WTC11 (cell line): ENCODE measurements at regions of chr14 and their contacts with region 1.

Region 1: DNA sequence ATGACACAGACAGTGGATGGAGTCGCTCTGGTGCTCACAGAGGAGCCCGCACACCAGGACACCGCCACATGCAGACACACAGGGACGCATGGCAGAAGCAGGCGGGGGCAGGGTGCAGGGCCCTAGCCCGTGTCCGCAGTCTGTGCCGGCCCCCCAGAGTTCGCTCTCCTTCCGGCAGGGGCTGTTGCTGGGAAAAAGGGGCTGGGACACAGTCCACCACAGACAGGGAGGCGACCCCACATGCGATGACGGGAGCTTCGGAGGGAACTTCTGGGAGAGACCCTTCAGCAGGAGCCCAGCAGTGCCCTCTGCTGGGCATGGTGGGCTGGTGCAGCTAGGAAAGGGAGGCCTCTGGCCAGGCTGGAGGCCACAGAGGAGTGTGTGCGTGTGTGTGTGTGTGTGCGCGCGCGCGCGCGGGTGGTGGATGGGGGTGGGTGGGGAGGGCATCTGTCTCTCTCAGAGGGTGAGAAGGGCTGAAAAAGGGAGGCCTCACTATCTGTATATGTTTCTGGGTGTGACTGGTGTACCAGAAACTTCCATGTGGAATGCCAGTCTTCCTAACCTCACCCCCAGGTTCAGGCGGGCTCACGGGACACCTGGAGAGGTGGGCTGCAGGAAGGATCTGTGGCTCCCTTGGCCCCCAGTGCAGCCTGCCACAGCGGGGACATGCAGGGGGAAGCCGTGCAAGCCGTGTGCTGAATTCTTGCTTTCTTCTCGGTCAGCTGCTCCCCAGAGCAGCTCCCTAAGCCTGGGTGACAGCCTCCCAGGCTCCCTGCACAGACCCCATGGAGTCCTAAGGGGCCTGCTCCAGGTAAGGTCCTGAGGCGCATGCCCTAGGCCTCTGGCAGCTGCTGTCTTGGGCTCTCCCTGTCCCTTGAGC is 60.7 kb downstream of the PLEKHG3 start:
- DNase-seq: peak; percentile 86
- ATAC-seq: peak; percentile 54
- H3K4me3 Mint-ChIP-seq: peak overlapping the region; percentile 40
- H3K27ac Mint-ChIP-seq: no peak overlapping the region
- H3K4me1 Mint-ChIP-seq: peaks cover 48% of the 10 kb centered on the region
- H3K27me3 Mint-ChIP-seq: peaks cover 18% of the 10 kb centered on the region
- CTCF ChIP-seq: peak; percentile 95

Region 2: GRCh38 chr14:64681796-64682710 is 82.8 kb before region 1 on chr14:
- CTCF ChIA-PET with region 1: interaction called, 13 read pairs
- POLR2A ChIA-PET with region 1: no interaction called
- DNase-seq: peak; percentile 40
- ATAC-seq: peak; percentile 84
- H3K4me3 Mint-ChIP-seq: no peak overlapping the region
- H3K27ac Mint-ChIP-seq: peak overlapping the region; percentile 66; the same call in 1 of the 2 replicates
- H3K4me1 Mint-ChIP-seq: peaks cover 39% of the 10 kb centered on the region
- H3K27me3 Mint-ChIP-seq: peaks cover under 1% of the 10 kb centered on the region
- CTCF ChIP-seq: no peak

Region 3: GRCh38 chr14:64704143-64704742 is 60.6 kb before region 1 on chr14 and contains the start of gene PLEKHG3:
- CTCF ChIA-PET with region 1: interaction called, 17 read pairs
- POLR2A ChIA-PET with region 1: no interaction called
- DNase-seq: peak; percentile 89
- ATAC-seq: peak; percentile 15
- H3K4me3 Mint-ChIP-seq: peak within 1 kb of the TSS; percentile 84
- H3K27ac Mint-ChIP-seq: peak within 1 kb of the TSS; percentile 97
- H3K4me1 Mint-ChIP-seq: peaks cover 76% of the 10 kb centered on the region
- H3K27me3 Mint-ChIP-seq: no peaks in the 10 kb centered on the region
- CTCF ChIP-seq: no peak
- total RNA-seq, gene PLEKHG3: 70.6 to 75.3 TPM (median 71.8 TPM) in 3 replicates

Region 4: DNA sequence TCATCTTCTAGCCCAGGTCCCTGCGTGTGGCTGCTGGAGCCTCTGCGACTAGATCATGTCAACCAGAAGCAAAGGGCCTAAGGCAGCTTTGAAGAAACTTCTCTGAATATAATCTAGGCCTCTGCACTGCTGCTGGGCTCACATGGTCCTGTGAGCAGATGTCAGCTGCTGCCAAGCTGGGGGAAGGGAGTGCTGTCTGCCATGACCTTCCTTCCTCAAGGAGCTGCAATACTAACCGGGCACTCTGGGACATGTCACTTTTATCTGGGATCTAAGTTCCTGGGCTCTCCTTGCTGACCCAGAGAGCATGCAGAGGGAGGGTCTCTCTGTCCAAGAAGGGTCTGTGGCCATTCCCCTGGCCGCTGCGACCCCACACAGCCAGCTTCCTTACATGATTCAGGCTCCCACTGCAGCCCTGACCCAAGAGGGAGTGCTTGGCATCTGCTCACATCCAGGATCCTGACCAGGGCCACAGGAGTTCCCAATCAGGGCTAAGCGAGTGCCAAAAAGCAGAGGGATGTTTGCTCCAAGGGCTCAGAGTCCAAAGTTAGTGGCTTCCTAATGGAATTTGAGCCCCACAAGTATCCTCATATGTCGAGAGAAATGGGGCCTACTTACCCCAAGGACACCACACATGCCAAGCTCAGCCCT is 13.3 kb after region 1 on chr14:
- CTCF ChIA-PET with region 1: interaction called, 18 read pairs
- POLR2A ChIA-PET with region 1: no interaction called
- DNase-seq: no peak
- ATAC-seq: no peak
- H3K4me3 Mint-ChIP-seq: no peak overlapping the region
- H3K27ac Mint-ChIP-seq: no peak overlapping the region
- H3K4me1 Mint-ChIP-seq: peaks cover 5% of the 10 kb centered on the region
- H3K27me3 Mint-ChIP-seq: peaks cover 1% of the 10 kb centered on the region; the same call in 1 of the 2 replicates
- CTCF ChIP-seq: no peak

Region 5: GRCh38 chr14:64800000-64800399 is 35.1 kb after region 1 on chr14:
- CTCF ChIA-PET with region 1: interaction called, 75 read pairs
- POLR2A ChIA-PET with region 1: interaction called, 4 read pairs
- DNase-seq: peak; percentile 38
- ATAC-seq: peak; percentile 49
- H3K4me3 Mint-ChIP-seq: no peak overlapping the region
- H3K27ac Mint-ChIP-seq: no peak overlapping the region
- H3K4me1 Mint-ChIP-seq: peaks cover 3% of the 10 kb centered on the region; the same call in 1 of the 2 replicates
- H3K27me3 Mint-ChIP-seq: no peaks in the 10 kb centered on the region; the same call in 1 of the 2 replicates
- CTCF ChIP-seq: 0 out of 2 replicates have a peak, but pooled peaks have one; percentile 26

Region 6: DNA sequence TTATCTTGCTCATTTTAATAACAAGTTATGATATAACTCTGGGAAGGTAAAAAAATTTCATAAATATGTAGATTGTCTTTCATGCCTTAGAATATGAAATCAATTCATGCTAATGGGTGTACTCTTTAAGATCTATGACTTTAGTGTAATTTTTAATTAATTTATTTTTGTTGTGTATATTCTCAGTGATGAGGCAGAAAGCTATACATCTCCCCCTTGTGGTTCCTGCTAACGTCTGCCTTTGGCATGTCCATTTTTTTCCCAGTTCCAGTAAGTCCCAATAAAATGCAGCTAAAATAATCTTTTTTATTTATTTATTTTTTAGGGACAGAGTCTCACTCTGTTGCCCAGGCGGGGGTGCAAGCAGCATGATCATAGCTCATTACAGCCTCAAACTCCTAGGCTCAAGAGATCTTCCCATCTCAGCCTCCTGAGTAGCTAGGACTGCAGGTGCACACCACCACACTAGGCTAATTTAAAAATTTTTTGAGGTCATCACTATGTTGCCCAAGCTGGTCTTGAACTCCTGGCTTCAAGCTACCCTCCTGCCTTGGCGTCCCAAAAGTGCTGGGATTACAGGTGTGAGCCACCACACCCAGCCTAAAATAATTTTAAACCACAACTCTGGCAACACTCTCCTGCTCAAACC is 146.1 kb after region 1 on chr14:
- CTCF ChIA-PET with region 1: interaction called, 10 read pairs
- POLR2A ChIA-PET with region 1: no interaction called
- DNase-seq: no peak
- ATAC-seq: no peak
- H3K4me3 Mint-ChIP-seq: no peak overlapping the region
- H3K27ac Mint-ChIP-seq: no peak overlapping the region
- H3K4me1 Mint-ChIP-seq: peaks cover 11% of the 10 kb centered on the region
- H3K27me3 Mint-ChIP-seq: no peaks in the 10 kb centered on the region; the same call in none of the 2 replicates
- CTCF ChIP-seq: peak; percentile 41; the same call in 1 of the 2 replicates

Region 7: DNA sequence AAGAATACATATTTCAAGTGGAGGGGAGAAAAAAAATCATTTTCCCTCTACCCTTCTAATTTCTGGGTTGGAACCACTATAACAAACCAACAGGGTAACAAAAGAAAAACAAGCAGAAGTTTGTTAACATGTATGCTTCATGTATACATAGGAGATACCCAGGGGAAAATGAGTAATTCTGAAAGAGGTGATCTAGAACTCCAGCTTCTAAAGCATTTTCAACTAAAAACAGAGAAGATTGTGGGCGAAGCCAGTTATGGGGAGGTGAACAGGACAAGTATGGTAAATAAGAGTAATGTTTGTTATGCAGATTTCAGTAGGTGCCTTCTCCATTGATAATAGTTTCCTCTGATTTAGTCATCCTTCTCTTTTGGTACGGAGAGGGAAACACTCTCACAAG is 238.5 kb after region 1 on chr14:
- CTCF ChIA-PET with region 1: no interaction called
- POLR2A ChIA-PET with region 1: no interaction called
- DNase-seq: no peak
- ATAC-seq: no peak
- H3K4me3 Mint-ChIP-seq: no peak overlapping the region
- H3K27ac Mint-ChIP-seq: no peak overlapping the region
- H3K4me1 Mint-ChIP-seq: peaks cover 29% of the 10 kb centered on the region
- H3K27me3 Mint-ChIP-seq: no peaks in the 10 kb centered on the region
- CTCF ChIP-seq: no peak